ENCODE measurements at regions of chrX and their contacts with region 1.

Region 1: GRCh38 chrX:45515262-45516215 is 314.9 kb upstream of the DIPK2B start:
- DNase-seq: peak; percentile 57 to 93 (median 89)
- H3K4me3 ChIP-seq: no peak overlapping the region
- H3K27ac ChIP-seq: peak overlapping the region in 3 of 5 donors; percentile 20 to 47 (median 46)
- H3K4me1 ChIP-seq: peaks cover 0 to 4% of the 10 kb centered on the region in 2 donors
- H3K27me3 ChIP-seq: peaks cover 3% of the 10 kb centered on the region
- CTCF ChIP-seq: peak; percentile 24 to 61 (median 55)
- POLR2A ChIP-seq: no peak

Region 2: GRCh38 chrX:45598861-45599260 is 83.3 kb after region 1 on chrX:
- intact Hi-C with region 1: no loop called
- DNase-seq: no peak
- H3K4me3 ChIP-seq: no peak overlapping the region
- H3K27ac ChIP-seq: no peak overlapping the region
- H3K4me1 ChIP-seq: no peaks in the 10 kb centered on the region
- H3K27me3 ChIP-seq: no peaks in the 10 kb centered on the region
- CTCF ChIP-seq: no peak
- POLR2A ChIP-seq: no peak

Region 3: GRCh38 chrX:45769761-45770582 is 254.4 kb after region 1 on chrX:
- intact Hi-C with region 1: loop called in 1 of 2 experiments (anchors 10 kb)
- DNase-seq: peak; percentile 33 to 73 (median 58)
- H3K4me3 ChIP-seq: peak overlapping the region in 1 of 4 donors; percentile 48
- H3K27ac ChIP-seq: peak overlapping the region in 3 of 5 donors; percentile 55 to 80 (median 72)
- H3K4me1 ChIP-seq: peaks cover 0 to 6% of the 10 kb centered on the region in 2 donors
- H3K27me3 ChIP-seq: no peaks in the 10 kb centered on the region
- CTCF ChIP-seq: no peak
- POLR2A ChIP-seq: peak in 1 of 2 donors; percentile 29

Measured in adrenal gland (tissue), 19 donors.